Heart left ventricle (tissue), 16 donors: ENCODE measurements at regions of chr2 and their contacts with region 1.

Region 1: GRCh38 chr2:97806738-97807618 is 93.6 kb downstream of the ZAP70 start:
- DNase-seq: peak; percentile 82 to 90 (median 87)
- ATAC-seq: peak; percentile 84 to 98 (median 96)
- H3K4me3 ChIP-seq: no peak overlapping the region
- H3K27ac ChIP-seq: peak overlapping the region in 2 of 12 donors; percentile 14 to 36
- H3K4me1 ChIP-seq: peaks cover 0 to 8% (median 5%) of the 10 kb centered on the region in 12 donors
- H3K27me3 ChIP-seq: no peaks in the 10 kb centered on the region
- CTCF ChIP-seq: peak; percentile 86 to 99 (median 94)
- POLR2A ChIP-seq: no peak

Region 2: DNA sequence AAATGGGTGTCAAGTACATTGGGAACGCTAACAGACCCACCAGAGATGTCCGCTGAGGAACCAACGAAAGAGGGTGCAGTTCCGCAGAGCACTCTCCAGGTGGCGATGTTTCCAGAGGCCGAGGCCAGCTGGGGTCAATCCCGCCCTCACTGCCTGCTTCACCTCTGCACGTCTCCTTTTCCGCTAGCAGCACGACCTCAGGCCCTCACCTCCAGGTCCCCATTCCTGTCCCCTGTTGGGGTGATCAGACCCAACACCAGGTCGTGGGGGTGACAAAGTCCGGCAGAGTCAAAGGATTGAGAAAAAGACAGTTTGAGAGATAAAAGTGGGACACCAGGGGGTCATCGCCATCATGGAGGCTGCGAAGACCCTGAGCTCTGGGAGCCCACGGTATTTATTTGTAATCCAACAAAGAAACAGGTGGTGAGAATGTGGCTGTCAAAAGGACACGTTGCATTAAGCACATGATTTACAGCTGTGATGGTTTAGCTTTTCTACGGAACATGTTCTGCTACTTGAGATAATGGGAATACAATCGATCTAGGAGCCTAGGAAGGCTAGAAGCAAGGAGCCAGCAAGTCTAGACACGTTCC is 66.3 kb before region 1 on chr2:
- intact Hi-C with region 1: no loop called
- DNase-seq: peak in 2 of 5 donors; percentile 31 to 45
- ATAC-seq: peak in 1 of 4 donors; percentile 28
- H3K4me3 ChIP-seq: no peak overlapping the region
- H3K27ac ChIP-seq: no peak overlapping the region
- H3K4me1 ChIP-seq: peaks cover 0 to 26% (median 6%) of the 10 kb centered on the region in 12 donors
- H3K27me3 ChIP-seq: no peaks in the 10 kb centered on the region
- CTCF ChIP-seq: peak; percentile 48 to 69 (median 61)
- POLR2A ChIP-seq: peak in 1 of 2 donors; percentile 13

Region 3: GRCh38 chr2:98004613-98005012 is 197.6 kb after region 1 on chr2:
- intact Hi-C with region 1: loop called in 8 of 10 experiments (anchors 5 to 10 kb)
- DNase-seq: no peak
- ATAC-seq: no peak
- H3K4me3 ChIP-seq: no peak overlapping the region
- H3K27ac ChIP-seq: no peak overlapping the region
- H3K4me1 ChIP-seq: no peaks in the 10 kb centered on the region
- H3K27me3 ChIP-seq: no peaks in the 10 kb centered on the region
- CTCF ChIP-seq: no peak
- POLR2A ChIP-seq: no peak

Region 4: DNA sequence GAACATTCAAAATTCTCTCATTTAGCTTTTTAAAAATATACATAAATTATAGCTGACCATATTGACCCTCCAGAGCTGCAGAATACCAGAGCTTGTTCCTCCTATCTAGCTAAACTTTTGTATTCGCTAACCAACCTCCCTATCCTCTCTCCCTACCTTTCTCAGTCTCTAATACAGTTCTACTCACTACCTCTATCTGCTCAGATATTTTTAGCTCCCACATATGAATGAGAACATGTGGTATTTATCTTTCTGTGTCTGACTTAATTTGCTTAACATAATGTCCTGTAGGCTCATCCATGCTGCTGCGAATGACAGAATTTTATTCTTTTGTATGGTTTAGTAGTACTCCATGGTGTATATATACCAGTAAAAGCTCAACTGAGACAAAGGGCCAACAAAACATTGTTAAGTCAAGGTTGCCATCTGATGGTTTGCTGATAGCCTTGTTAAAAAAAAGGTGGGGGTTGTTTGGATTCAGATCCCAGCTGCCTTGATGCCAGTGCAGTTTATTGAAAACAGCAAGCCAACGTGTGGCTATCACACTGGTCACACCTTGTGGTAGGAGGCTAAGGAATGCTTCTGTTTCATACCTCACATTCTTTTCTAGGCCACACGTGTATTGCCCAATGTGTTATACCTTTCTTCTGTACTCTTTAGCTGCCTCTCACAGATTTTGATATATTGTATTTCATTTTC is 381.5 kb after region 1 on chr2:
- intact Hi-C with region 1: loop called in 2 of 10 experiments (anchors 5 kb)
- DNase-seq: no peak
- ATAC-seq: peak in 1 of 4 donors; percentile 33
- H3K4me3 ChIP-seq: no peak overlapping the region
- H3K27ac ChIP-seq: no peak overlapping the region
- H3K4me1 ChIP-seq: peaks cover 0 to 17% (median 2%) of the 10 kb centered on the region in 12 donors
- H3K27me3 ChIP-seq: peaks cover 0 to 4% (median 0%) of the 10 kb centered on the region in 9 donors
- CTCF ChIP-seq: no peak
- POLR2A ChIP-seq: no peak

Region 5: GRCh38 chr2:98269274-98269673 is 462.3 kb after region 1 on chr2:
- intact Hi-C with region 1: loop called in 9 of 10 experiments (anchors 2 to 10 kb)
- DNase-seq: peak in 1 of 5 donors; percentile 19
- ATAC-seq: peak in 1 of 4 donors; percentile 46
- H3K4me3 ChIP-seq: no peak overlapping the region
- H3K27ac ChIP-seq: no peak overlapping the region
- H3K4me1 ChIP-seq: peaks cover 0 to 3% (median 0%) of the 10 kb centered on the region in 12 donors
- H3K27me3 ChIP-seq: no peaks in the 10 kb centered on the region
- CTCF ChIP-seq: peak; percentile 51 to 69 (median 59)
- POLR2A ChIP-seq: no peak